ENCODE measurements at regions of chr7 and their contacts with region 1.

Region 1: GRCh38 chr7:36280840-36281812 is 108.5 kb upstream of the ANLN start:
- DNase-seq: peak; percentile 90
- ATAC-seq: peak; percentile 86
- H3K4me3 ChIP-seq: no peak overlapping the region
- H3K27ac ChIP-seq: peak overlapping the region; percentile 80
- H3K4me1 ChIP-seq: peaks cover 38% of the 10 kb centered on the region
- H3K27me3 ChIP-seq: no peaks in the 10 kb centered on the region
- CTCF ChIP-seq: no peak
- POLR2A ChIP-seq: no peak
- RAD21 ChIP-seq: peak; percentile 37

Region 2: GRCh38 chr7:35993676-35994606 is 287.2 kb before region 1 on chr7:
- CTCF ChIA-PET with region 1: no interaction called
- POLR2A ChIA-PET with region 1: no interaction called
- dilution Hi-C with region 1: no loop called
- in situ Hi-C with region 1: no loop called
- intact Hi-C with region 1: no loop called
- DNase-seq: peak; percentile 33
- ATAC-seq: 0 out of 2 replicates have a peak, but pooled peaks have one; percentile 27
- H3K4me3 ChIP-seq: no peak overlapping the region
- H3K27ac ChIP-seq: no peak overlapping the region
- H3K4me1 ChIP-seq: no peaks in the 10 kb centered on the region
- H3K27me3 ChIP-seq: no peaks in the 10 kb centered on the region
- CTCF ChIP-seq: no peak
- POLR2A ChIP-seq: no peak
- RAD21 ChIP-seq: no peak

Region 3: GRCh38 chr7:36021367-36021766 is 259.8 kb before region 1 on chr7:
- CTCF ChIA-PET with region 1: no interaction called
- POLR2A ChIA-PET with region 1: no interaction called
- dilution Hi-C with region 1: no loop called
- in situ Hi-C with region 1: no loop called
- intact Hi-C with region 1: no loop called
- DNase-seq: no peak
- ATAC-seq: no peak
- H3K4me3 ChIP-seq: no peak overlapping the region
- H3K27ac ChIP-seq: no peak overlapping the region
- H3K4me1 ChIP-seq: peaks cover 2% of the 10 kb centered on the region; the same call in 1 of the 2 replicates
- H3K27me3 ChIP-seq: peaks cover 10% of the 10 kb centered on the region
- CTCF ChIP-seq: peak; percentile 29
- POLR2A ChIP-seq: no peak
- RAD21 ChIP-seq: no peak

Region 4: GRCh38 chr7:36192053-36192824 is 88.9 kb before region 1 on chr7:
- CTCF ChIA-PET with region 1: no interaction called
- POLR2A ChIA-PET with region 1: no interaction called
- dilution Hi-C with region 1: no loop called
- in situ Hi-C with region 1: no loop called
- intact Hi-C with region 1: loop called (anchors 1 kb)
- DNase-seq: peak; percentile 98
- ATAC-seq: peak; percentile 64
- H3K4me3 ChIP-seq: no peak overlapping the region
- H3K27ac ChIP-seq: peak overlapping the region; percentile 83
- H3K4me1 ChIP-seq: peaks cover 32% of the 10 kb centered on the region
- H3K27me3 ChIP-seq: no peaks in the 10 kb centered on the region
- CTCF ChIP-seq: 0 out of 2 replicates have a peak, but pooled peaks have one; percentile 22
- POLR2A ChIP-seq: no peak; the same call in 1 of the 2 replicates
- RAD21 ChIP-seq: peak; percentile 35; the same call in 1 of the 2 replicates

Region 5: DNA sequence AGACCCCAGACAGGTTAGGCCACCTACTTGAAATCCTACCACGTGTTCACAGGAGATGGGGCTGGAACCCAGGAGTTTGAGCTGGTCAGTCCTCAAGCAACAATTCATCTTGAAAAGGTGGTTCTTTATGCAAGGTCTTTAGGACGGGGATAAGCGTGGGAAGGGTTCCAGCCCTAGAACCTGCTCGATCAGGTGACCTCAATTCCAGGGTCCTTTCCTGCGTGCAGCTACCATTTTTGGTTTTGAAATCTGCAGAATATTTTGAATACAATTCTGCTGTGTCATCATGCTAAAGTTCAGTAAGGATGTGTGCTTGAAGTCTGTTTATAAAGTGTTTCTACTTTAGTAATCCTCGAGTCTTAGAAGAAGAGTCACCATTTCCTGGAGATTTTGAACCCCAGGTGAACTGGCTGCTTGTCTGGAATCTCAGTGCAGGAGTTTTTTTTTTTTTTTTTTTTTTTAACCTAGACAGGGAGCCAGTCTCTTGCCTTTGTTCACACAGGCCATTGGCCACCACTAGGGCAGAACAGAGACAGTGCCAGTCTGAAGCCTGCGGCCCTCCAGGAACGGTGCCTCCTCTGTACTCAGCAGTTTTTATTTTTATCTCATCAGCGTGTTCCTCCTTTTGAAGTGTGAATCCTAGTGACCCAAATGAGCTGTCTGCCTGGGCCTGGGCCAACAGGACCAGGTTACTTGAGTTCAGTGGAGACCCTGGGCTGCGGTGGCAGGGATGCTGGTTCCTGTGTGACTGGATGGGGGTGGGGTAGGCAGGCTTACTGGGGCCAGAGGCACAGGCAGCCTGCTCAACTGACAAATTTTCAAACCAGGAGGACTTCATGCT is 73.5 kb before region 1 on chr7:
- CTCF ChIA-PET with region 1: no interaction called
- POLR2A ChIA-PET with region 1: no interaction called
- dilution Hi-C with region 1: no loop called
- in situ Hi-C with region 1: no loop called
- intact Hi-C with region 1: loop called (anchors 5 kb)
- DNase-seq: peak; percentile 96
- ATAC-seq: peak; percentile 60
- H3K4me3 ChIP-seq: no peak overlapping the region
- H3K27ac ChIP-seq: peak overlapping the region; percentile 99
- H3K4me1 ChIP-seq: peaks cover 61% of the 10 kb centered on the region
- H3K27me3 ChIP-seq: no peaks in the 10 kb centered on the region
- CTCF ChIP-seq: 0 out of 2 replicates have a peak, but pooled peaks have one; percentile 14
- POLR2A ChIP-seq: no peak
- RAD21 ChIP-seq: peak; percentile 11; the same call in 1 of the 2 replicates

Measured in IMR-90 (cell line).